ENCODE measurements at regions of chr1 and their contacts with region 1.

Region 1: DNA sequence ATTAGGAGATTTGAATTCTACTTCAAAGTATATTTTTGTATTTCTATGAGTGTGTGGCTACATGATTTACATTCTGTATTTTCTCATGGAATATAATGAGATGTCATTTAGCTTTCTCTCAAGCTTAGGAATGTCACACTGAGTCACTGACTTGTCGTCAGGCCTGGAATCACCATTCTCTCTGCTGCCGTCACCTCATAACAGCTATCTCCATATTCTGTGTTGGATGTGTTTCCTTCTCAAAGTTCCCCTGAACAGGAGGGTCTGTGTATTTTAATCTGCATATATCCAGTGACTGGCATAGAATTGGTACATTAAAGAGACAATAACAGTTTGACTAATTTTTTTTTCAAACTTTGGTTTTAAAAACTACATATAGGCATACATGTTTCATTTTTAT is 35.9 kb downstream of the LYPLAL1 start:
- DNase-seq: no peak
- ATAC-seq: peak; percentile 51; the same call in 1 of the 2 replicates
- H3K4me3 ChIP-seq: no peak overlapping the region
- H3K27ac ChIP-seq: peak overlapping the region; percentile 55; the same call in 1 of the 2 replicates
- H3K4me1 ChIP-seq: peaks cover 2% of the 10 kb centered on the region
- H3K27me3 ChIP-seq: no peaks in the 10 kb centered on the region
- CTCF ChIP-seq: no peak
- POLR2A ChIP-seq: no peak
- RAD21 ChIP-seq: no peak

Region 2: GRCh38 chr1:218330043-218330623 is 879.4 kb before region 1 on chr1:
- CTCF ChIA-PET with region 1: no interaction called
- POLR2A ChIA-PET with region 1: no interaction called
- dilution Hi-C with region 1: no loop called
- in situ Hi-C with region 1: no loop called
- intact Hi-C with region 1: loop called (anchors 10 kb)
- DNase-seq: peak; percentile 61
- ATAC-seq: peak; percentile 74
- H3K4me3 ChIP-seq: no peak overlapping the region
- H3K27ac ChIP-seq: no peak overlapping the region
- H3K4me1 ChIP-seq: peaks cover 2% of the 10 kb centered on the region; the same call in 1 of the 2 replicates
- H3K27me3 ChIP-seq: no peaks in the 10 kb centered on the region
- CTCF ChIP-seq: peak; percentile 78
- POLR2A ChIP-seq: no peak
- RAD21 ChIP-seq: peak; percentile 92

Region 3: GRCh38 chr1:218686258-218686657 is 523.3 kb before region 1 on chr1:
- CTCF ChIA-PET with region 1: no interaction called
- POLR2A ChIA-PET with region 1: no interaction called
- dilution Hi-C with region 1: no loop called
- in situ Hi-C with region 1: no loop called
- intact Hi-C with region 1: loop called (anchors 10 kb)
- DNase-seq: peak; percentile 79
- ATAC-seq: peak; percentile 90
- H3K4me3 ChIP-seq: no peak overlapping the region
- H3K27ac ChIP-seq: peak overlapping the region; percentile 19; the same call in 1 of the 2 replicates
- H3K4me1 ChIP-seq: no peaks in the 10 kb centered on the region
- H3K27me3 ChIP-seq: no peaks in the 10 kb centered on the region
- CTCF ChIP-seq: no peak
- POLR2A ChIP-seq: no peak
- RAD21 ChIP-seq: no peak

Region 4: GRCh38 chr1:219385786-219386427 is 176.3 kb after region 1 on chr1:
- CTCF ChIA-PET with region 1: interaction called, 7 read pairs
- POLR2A ChIA-PET with region 1: no interaction called
- dilution Hi-C with region 1: no loop called
- in situ Hi-C with region 1: loop called (anchors 10 kb)
- intact Hi-C with region 1: loop called (anchors 2 kb)
- DNase-seq: peak; percentile 71
- ATAC-seq: peak; percentile 87
- H3K4me3 ChIP-seq: no peak overlapping the region
- H3K27ac ChIP-seq: no peak overlapping the region
- H3K4me1 ChIP-seq: peaks cover 2% of the 10 kb centered on the region; the same call in 1 of the 2 replicates
- H3K27me3 ChIP-seq: no peaks in the 10 kb centered on the region
- CTCF ChIP-seq: peak; percentile 83
- POLR2A ChIP-seq: no peak
- RAD21 ChIP-seq: peak; percentile 92

Region 5: GRCh38 chr1:219416594-219417238 is 207.1 kb after region 1 on chr1:
- CTCF ChIA-PET with region 1: no interaction called
- POLR2A ChIA-PET with region 1: no interaction called
- dilution Hi-C with region 1: no loop called
- in situ Hi-C with region 1: no loop called
- intact Hi-C with region 1: loop called (anchors 10 kb)
- DNase-seq: peak; percentile 50
- ATAC-seq: peak; percentile 56; the same call in 1 of the 2 replicates
- H3K4me3 ChIP-seq: no peak overlapping the region
- H3K27ac ChIP-seq: no peak overlapping the region
- H3K4me1 ChIP-seq: no peaks in the 10 kb centered on the region
- H3K27me3 ChIP-seq: no peaks in the 10 kb centered on the region
- CTCF ChIP-seq: peak; percentile 64
- POLR2A ChIP-seq: no peak
- RAD21 ChIP-seq: peak; percentile 69

Region 6: DNA sequence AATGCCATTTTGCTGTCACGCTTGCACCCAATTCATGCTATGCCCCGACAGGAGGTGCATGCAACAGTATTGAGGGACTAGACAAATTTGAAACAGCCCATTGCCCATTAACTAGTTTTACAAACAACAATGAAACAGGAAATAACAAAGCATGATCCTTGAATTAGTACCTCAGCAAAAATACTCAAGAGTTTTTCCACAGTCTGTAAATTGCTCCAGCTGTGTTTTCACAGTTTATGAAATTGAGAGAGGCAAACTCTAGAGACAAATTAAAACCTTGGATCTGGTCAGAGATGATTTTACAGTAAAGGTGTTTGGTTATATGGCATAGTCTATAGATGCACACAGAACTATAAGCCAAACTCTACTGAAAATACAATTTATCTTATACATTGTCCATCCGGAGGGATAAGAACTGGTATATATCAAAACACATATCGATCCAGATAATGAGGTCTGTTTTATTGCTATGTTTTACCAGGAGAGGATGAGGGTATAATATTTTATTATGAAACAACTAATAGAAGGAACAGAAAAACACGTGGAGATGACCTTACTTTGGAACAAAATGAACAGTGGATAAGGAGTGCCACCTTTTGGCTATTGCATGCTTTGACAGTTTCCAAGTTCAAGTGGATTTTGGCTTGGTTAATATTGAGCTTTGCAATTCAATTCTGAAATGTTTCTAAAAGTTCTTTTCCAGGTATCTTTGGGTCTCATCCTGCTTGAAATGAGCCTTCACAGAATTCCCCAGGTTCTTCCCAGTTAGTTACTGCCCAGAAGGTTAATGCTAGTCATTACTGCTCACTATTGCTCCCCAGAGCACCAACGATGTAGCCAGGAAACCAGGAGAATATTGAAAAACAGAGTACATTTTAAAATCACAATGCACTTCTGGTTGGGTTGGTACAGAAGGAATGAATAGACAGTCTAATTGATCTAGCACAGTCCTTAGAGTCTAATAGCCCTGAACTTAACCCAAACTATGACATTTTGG is 357.7 kb after region 1 on chr1:
- CTCF ChIA-PET with region 1: no interaction called
- POLR2A ChIA-PET with region 1: no interaction called
- dilution Hi-C with region 1: no loop called
- in situ Hi-C with region 1: loop called (anchors 10 kb)
- intact Hi-C with region 1: loop called (anchors 2 kb)
- DNase-seq: peak; percentile 71
- ATAC-seq: peak; percentile 75
- H3K4me3 ChIP-seq: no peak overlapping the region
- H3K27ac ChIP-seq: no peak overlapping the region
- H3K4me1 ChIP-seq: no peaks in the 10 kb centered on the region
- H3K27me3 ChIP-seq: no peaks in the 10 kb centered on the region
- CTCF ChIP-seq: peak; percentile 70
- POLR2A ChIP-seq: no peak
- RAD21 ChIP-seq: peak; percentile 79

Region 7: GRCh38 chr1:219660666-219661463 is 451.3 kb after region 1 on chr1:
- CTCF ChIA-PET with region 1: no interaction called
- POLR2A ChIA-PET with region 1: no interaction called
- dilution Hi-C with region 1: no loop called
- in situ Hi-C with region 1: no loop called
- intact Hi-C with region 1: loop called (anchors 5 kb)
- DNase-seq: peak; percentile 88
- ATAC-seq: peak; percentile 92
- H3K4me3 ChIP-seq: no peak overlapping the region
- H3K27ac ChIP-seq: peak overlapping the region; percentile 60; the same call in 1 of the 2 replicates
- H3K4me1 ChIP-seq: peaks cover 6% of the 10 kb centered on the region; the same call in 1 of the 2 replicates
- H3K27me3 ChIP-seq: no peaks in the 10 kb centered on the region
- CTCF ChIP-seq: peak; percentile 89
- POLR2A ChIP-seq: 0 out of 2 replicates have a peak, but pooled peaks have one; percentile 27
- RAD21 ChIP-seq: peak; percentile 81